Right ventricle myocardium inferior (tissue), 1 donor: ENCODE measurements at regions of chr2 and their contacts with region 1.

Region 1: DNA sequence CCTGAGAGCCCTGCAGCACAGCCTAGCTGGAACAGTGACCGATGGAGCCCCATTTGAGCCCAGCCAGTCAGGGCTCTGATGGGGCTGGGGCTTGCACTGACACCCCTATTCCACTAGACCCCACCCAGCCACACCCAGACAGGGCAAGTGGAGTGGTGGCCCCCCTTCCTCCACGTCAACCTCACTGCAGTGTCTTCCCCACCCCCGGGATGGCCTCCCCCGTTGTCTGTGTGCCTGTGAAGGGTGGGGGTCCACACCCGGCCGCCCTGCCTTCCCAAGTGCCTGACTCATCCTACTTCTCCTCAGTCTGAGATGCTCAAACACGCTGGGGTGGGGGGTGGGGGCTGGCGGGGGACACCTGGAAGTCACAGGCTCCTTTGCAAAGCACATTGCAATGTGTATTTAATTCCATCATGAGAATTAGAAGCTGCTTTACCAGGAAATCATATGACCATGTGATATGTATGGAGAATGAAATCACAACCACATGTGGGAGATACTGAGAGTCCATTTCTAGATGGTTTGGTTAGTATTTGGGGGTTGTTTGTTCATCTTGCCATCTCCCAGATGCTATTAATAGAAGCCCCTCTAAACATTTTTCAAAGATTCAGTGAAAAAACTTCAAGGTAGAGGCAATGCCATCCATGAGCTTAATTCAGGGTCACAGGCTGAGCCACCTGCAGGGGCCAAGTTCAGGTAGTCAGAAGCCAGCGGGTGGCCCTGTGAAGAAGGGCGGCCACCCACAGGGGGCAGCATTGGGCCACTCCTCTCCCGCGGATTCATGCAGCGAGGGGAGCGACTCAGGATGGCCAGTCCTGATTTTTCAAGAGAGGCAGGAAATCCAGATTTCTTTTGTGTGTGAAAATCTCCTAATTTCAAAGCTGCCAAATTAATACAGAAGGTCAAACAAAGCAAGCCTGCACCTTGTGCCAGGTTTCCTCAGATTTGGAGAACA is 22.7 kb upstream of the GMPPA start:
- DNase-seq: peak; percentile 80
- ATAC-seq: peak; percentile 56

Region 2: DNA sequence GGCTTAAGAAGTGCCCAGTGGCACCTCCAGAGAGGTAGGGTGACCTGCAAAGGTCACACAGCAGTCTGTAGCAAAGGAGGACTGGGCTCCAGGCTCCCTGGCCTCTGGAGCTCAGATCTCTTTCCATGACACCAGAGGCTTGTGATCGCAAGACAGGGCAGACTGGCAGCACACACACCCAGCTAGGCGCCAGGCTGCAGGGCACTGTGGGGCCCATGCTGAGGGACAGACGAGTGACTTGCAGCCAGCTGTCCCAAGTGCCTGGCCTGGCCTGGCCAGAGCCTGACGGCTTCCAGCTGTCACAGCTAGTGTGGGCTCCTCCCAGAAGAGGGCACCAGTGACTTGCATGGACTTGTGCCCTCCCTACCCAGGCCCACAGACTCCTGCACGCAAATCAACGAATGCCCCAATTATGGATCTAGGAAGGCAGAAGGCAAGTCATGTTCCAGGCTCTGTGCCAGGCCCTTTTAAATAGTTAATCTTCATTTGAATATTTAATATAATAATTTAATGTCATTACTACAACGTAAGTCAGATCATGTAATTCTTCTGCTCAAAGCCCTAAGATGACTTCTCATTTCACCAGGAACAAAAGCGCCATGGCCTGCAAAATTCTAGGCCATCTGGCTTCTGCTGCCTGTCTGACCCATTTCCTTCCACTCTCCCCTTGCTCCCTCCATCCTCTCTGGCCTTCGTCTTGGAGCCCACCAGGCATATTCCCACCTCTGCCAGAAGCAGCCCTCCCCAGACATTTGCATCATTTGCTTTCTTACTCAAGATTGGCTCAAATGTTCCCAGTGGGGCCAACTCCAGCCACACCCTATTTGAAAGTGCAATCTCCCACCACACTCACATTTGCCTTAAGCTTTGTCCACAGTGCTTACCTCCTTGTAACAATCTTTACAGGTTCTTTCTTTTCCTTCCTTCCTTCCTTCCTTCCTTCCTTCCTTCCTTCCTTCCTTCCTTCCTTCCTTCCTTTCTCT is 45.0 kb before region 1 on chr2:
- intact Hi-C with region 1: loop called (anchors 5 kb)
- DNase-seq: no peak
- ATAC-seq: peak; percentile 80

Region 3: GRCh38 chr2:219530048-219530963 is 54.3 kb after region 1 on chr2:
- intact Hi-C with region 1: loop called (anchors 2 kb)
- DNase-seq: peak; percentile 93
- ATAC-seq: peak; percentile 85